Cardiac septum (tissue), 1 donor: ENCODE measurements at regions of chrX and their contacts with region 1.

Region 1: DNA sequence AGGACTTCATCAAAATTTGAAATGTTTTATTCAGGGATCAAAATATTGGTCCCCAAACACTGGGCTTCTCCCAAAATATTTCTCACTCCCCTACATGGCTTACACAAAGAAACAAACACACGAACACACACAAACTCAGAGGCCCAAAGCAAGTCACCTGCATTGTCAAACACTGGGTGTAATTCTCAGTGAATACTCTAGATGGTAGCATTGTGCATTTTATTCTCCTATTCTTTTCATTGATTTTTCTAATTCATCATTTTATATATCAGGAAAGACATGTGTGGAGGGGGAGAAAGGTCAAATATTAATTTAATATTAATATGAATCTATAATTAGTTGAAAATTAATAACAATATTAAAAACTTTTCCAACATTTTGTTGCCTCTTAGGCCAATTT is 72.3 kb upstream of the TNMD start:
- DNase-seq: no peak

Region 2: DNA sequence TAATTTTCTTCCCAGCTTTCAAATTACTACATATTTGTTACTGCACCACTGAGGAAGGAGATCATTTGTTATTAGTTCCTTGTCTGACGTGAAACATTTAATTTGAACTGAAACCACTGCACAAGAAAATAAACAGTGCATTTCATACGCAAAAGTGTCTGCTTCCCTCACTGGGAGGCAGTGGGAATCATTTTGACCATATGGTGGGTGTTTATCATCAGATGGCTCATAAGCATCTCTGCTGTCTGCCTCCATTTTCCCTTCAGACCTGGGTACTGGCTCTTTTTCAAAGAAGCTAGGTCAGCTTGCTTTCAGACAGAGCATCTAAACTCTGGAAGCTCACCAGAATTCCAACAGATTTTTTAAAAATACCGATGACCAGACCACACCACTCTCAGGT is 237.6 kb before region 1 on chrX:
- intact Hi-C with region 1: no loop called
- DNase-seq: no peak

Region 3: DNA sequence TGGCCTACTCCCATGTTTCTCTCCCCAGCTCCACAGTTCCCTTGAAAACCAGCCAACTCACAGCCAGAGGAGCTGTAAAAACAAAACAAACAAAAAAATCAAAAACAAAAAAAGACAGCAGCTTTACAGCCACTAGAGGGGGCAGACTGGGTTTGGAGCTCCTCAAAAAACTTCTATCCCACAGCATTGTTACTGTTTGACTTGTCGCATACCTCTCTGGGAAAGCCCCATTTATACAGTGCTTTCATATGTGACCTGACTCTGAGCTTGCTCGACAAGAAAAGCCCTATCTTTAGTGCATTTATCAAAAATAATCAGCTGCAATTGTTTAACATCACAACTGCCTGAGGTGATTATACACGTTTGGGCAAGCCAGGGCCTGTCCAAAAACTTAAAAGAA is 102.5 kb after region 1 on chrX:
- intact Hi-C with region 1: loop called (anchors 10 kb)
- DNase-seq: no peak